H1 (cell line): ENCODE measurements at regions of chr19 and their contacts with region 1.

Region 1: DNA sequence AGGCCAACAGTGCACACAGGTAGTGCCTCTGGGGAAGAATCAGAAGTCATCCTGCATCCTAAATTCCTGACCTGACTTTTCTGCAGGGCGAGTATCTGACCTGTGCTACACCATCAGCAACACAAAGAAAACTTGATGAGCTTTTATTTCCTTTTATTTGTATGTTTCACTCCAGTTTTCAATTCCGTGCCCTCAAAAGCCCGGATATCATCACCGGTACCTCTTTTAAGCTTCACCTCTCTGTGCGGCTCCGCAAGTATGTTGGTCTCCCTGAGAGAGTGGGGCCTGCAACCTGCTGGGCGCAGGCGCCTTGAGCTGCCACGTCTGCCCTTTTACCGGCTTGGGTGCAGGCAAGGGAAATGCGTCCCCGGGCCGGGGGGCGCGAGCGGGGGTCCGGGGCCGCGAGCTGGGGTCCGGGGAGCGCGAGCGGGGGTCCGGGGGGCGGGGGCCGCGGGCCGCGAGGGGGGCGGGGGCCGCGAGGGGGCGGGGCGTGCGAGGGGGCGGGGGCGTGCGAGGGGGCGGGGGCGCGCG is 4.3 kb upstream of the DUXA start:
- DNase-seq: peak; percentile 15 to 42
- H3K4me3 ChIP-seq: peak overlapping the region; percentile 71 to 97 (median 78)
- H3K27ac ChIP-seq: no peak overlapping the region
- H3K4me1 ChIP-seq: peaks cover 0 to 3% (median 0%) of the 10 kb centered on the region in 4 experiments; a peak in 1 of 7 replicates
- H3K27me3 ChIP-seq: 0 out of 7 replicates have a peak, but pooled peaks cover 0 to 2% (median 0%) of the 10 kb centered on the region in 4 experiments
- CTCF ChIP-seq: no peak
- EP300 ChIP-seq: no peak
- POLR2A ChIP-seq: no peak
- RAD21 ChIP-seq: no peak

Region 2: GRCh38 chr19:57152921-57153320 is 18.7 kb before region 1 on chr19:
- CTCF ChIA-PET with region 1: no interaction called
- POLR2A ChIA-PET with region 1: no interaction called
- DNase-seq: no peak
- H3K4me3 ChIP-seq: no peak overlapping the region
- H3K27ac ChIP-seq: no peak overlapping the region
- H3K4me1 ChIP-seq: no peaks in the 10 kb centered on the region
- H3K27me3 ChIP-seq: no peaks in the 10 kb centered on the region
- CTCF ChIP-seq: no peak
- EP300 ChIP-seq: no peak
- POLR2A ChIP-seq: no peak
- RAD21 ChIP-seq: no peak

Region 3: GRCh38 chr19:57191141-57192076 is 19.8 kb after region 1 on chr19 and contains the start of gene ZNF264:
- CTCF ChIA-PET with region 1: interaction called, 3 read pairs
- POLR2A ChIA-PET with region 1: interaction called, 12 read pairs
- DNase-seq: peak; percentile 19 to 92
- H3K4me3 ChIP-seq: peak within 1 kb of the TSS; percentile 78 to 99 (median 90)
- H3K27ac ChIP-seq: peak within 1 kb of the TSS; percentile 78; the same call in 1 of the 2 replicates
- H3K4me1 ChIP-seq: peaks cover 0 to 6% (median 0%) of the 10 kb centered on the region in 4 experiments; a peak in 2 of 7 replicates
- H3K27me3 ChIP-seq: no peaks in the 10 kb centered on the region; a peak in 1 of 7 replicates
- CTCF ChIP-seq: no peak
- EP300 ChIP-seq: no peak
- POLR2A ChIP-seq: peak in 1 of 2 experiments; percentile 75; a peak in 2 of 3 replicates
- RAD21 ChIP-seq: no peak
- total RNA-seq, gene ZNF264: 20.0 and 22.9 TPM in 2 replicates